ENCODE measurements at regions of chr17 and their contacts with region 1.

Region 1: GRCh38 chr17:38799378-38800236 is at the start of gene PIP4K2B:
- DNase-seq: peak; percentile 96
- H3K4me3 ChIP-seq: peak within 1 kb of the TSS; percentile 51 to 94 (median 70)
- H3K27ac ChIP-seq: peak within 1 kb of the TSS; percentile 94
- H3K4me1 ChIP-seq: peaks cover 17% of the 10 kb centered on the region
- H3K27me3 ChIP-seq: no peaks in the 10 kb centered on the region
- CTCF ChIP-seq: no peak
- POLR2A ChIP-seq: peak; percentile 50
- total RNA-seq, gene PIP4K2B: 48.1 and 48.8 TPM in 2 replicates

Region 2: GRCh38 chr17:38789185-38789584 is 10.4 kb before region 1 on chr17:
- CTCF ChIA-PET with region 1: no interaction called
- POLR2A ChIA-PET with region 1: no interaction called
- dilution Hi-C with region 1: no loop called
- intact Hi-C with region 1: loop called (anchors 1 kb)
- DNase-seq: no peak
- H3K4me3 ChIP-seq: no peak overlapping the region
- H3K27ac ChIP-seq: no peak overlapping the region
- H3K4me1 ChIP-seq: peaks cover 22% of the 10 kb centered on the region
- H3K27me3 ChIP-seq: no peaks in the 10 kb centered on the region
- CTCF ChIP-seq: no peak
- POLR2A ChIP-seq: no peak

Measured in endothelial cell of umbilical vein (primary cell).